Endothelial cell of umbilical vein (primary cell): ENCODE measurements at regions of chrX and their contacts with region 1.

Region 1: GRCh38 chrX:120485638-120486520 is 16.8 kb upstream of the LAMP2 start:
- DNase-seq: peak; percentile 91
- H3K4me3 ChIP-seq: peak overlapping the region in 2 of 3 experiments; percentile 36 to 53
- H3K27ac ChIP-seq: peak overlapping the region; percentile 66
- H3K4me1 ChIP-seq: peaks cover 14% of the 10 kb centered on the region
- H3K27me3 ChIP-seq: no peaks in the 10 kb centered on the region
- CTCF ChIP-seq: peak; percentile 45 to 49
- POLR2A ChIP-seq: no peak

Region 2: GRCh38 chrX:120468825-120469525 is 16.9 kb before region 1 on chrX and contains the start of gene LAMP2:
- CTCF ChIA-PET with region 1: interaction called, 7 read pairs
- POLR2A ChIA-PET with region 1: no interaction called
- dilution Hi-C with region 1: no loop called
- intact Hi-C with region 1: loop called (anchors 1 kb)
- DNase-seq: peak; percentile 86
- H3K4me3 ChIP-seq: peak within 1 kb of the TSS; percentile 43 to 95 (median 86)
- H3K27ac ChIP-seq: peak within 1 kb of the TSS; percentile 87
- H3K4me1 ChIP-seq: peaks cover 10% of the 10 kb centered on the region
- H3K27me3 ChIP-seq: no peaks in the 10 kb centered on the region
- CTCF ChIP-seq: no peak
- POLR2A ChIP-seq: peak; percentile 82
- total RNA-seq, gene LAMP2: 128 and 135 TPM in 2 replicates

Region 3: DNA sequence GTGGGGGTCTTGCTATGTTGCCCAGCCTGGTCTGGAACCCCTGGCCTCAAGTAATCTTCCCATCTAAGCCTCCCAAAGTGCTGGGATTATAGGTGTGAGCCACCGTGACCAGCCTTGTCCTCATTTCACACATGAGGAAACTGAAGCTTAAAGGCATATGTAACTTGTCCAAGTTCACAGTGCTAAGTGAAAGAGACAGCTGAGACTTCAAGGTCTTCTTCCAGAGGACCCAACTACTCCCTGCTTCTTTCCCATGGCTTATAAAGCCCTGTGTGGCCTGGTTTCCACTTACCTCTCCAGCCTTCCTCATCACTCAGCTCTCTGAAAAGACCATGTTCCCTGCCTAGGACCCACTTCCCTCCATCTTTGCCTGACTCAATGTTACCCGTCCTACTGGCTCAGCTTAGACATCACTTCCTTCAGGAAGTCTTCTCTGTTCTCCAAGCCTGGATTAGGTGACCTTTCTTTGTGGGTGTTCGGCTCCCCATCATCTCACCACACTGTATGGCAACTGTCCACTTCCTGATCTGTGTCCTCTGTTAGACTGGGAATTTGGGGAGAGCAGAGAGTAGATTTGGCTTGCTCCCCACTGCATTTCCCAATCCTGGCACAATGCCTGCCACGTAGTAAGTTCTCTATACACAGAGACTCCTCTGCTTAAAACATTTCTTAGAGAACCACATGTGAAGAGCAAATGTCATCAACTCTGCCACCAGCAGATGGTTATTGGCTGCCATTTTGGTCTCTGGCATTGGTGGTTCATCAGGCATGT is 13.6 kb after region 1 on chrX:
- CTCF ChIA-PET with region 1: interaction called, 10 read pairs
- POLR2A ChIA-PET with region 1: no interaction called
- dilution Hi-C with region 1: no loop called
- intact Hi-C with region 1: no loop called
- DNase-seq: no peak
- H3K4me3 ChIP-seq: no peak overlapping the region
- H3K27ac ChIP-seq: no peak overlapping the region
- H3K4me1 ChIP-seq: peaks cover 3% of the 10 kb centered on the region
- H3K27me3 ChIP-seq: no peaks in the 10 kb centered on the region
- CTCF ChIP-seq: no peak
- POLR2A ChIP-seq: no peak

Region 4: GRCh38 chrX:120514236-120514635 is 28.4 kb after region 1 on chrX:
- CTCF ChIA-PET with region 1: interaction called, 4 read pairs
- POLR2A ChIA-PET with region 1: interaction called, 3 read pairs
- dilution Hi-C with region 1: no loop called
- intact Hi-C with region 1: loop called (anchors 2 kb)
- DNase-seq: peak; percentile 7
- H3K4me3 ChIP-seq: no peak overlapping the region
- H3K27ac ChIP-seq: no peak overlapping the region
- H3K4me1 ChIP-seq: peaks cover 7% of the 10 kb centered on the region
- H3K27me3 ChIP-seq: no peaks in the 10 kb centered on the region
- CTCF ChIP-seq: peak; percentile 14 to 33
- POLR2A ChIP-seq: no peak

Region 5: GRCh38 chrX:120603707-120604360 is 118.0 kb after region 1 on chrX and contains the start of gene MCTS1:
- CTCF ChIA-PET with region 1: no interaction called
- POLR2A ChIA-PET with region 1: no interaction called
- dilution Hi-C with region 1: no loop called
- intact Hi-C with region 1: loop called (anchors 2 kb)
- DNase-seq: peak; percentile 94
- H3K4me3 ChIP-seq: peak within 1 kb of the TSS; percentile 76 to 83 (median 79)
- H3K27ac ChIP-seq: peak within 1 kb of the TSS; percentile 72
- H3K4me1 ChIP-seq: peaks cover 10% of the 10 kb centered on the region
- H3K27me3 ChIP-seq: no peaks in the 10 kb centered on the region
- CTCF ChIP-seq: no peak
- POLR2A ChIP-seq: no peak
- total RNA-seq, gene MCTS1: 63.2 and 70.0 TPM in 2 replicates